Activated T-helper 1 cell treated with anti-CD3 and anti-CD28 coated beads, Interleukin-12 subunit alpha, Interleukin-12 subunit beta, Interleukin-2, Interleukin-4 antibody, amounts not matched to agents 30 ng/mL and 10 ng/mL and 1 ng/mL, durations not matched to agents 14 hours and 24 hours and 36 hours (primary cell): ENCODE measurements at regions of chr16 and their contacts with region 1.

Region 1: GRCh38 chr16:74998481-74999218 is at the start of gene ZNRF1:
- DNase-seq: peak; percentile 74
- H3K4me3 Mint-ChIP-seq: peak within 1 kb of the TSS; percentile 91
- H3K27ac Mint-ChIP-seq: peak within 1 kb of the TSS; percentile 86
- H3K4me1 Mint-ChIP-seq: peaks cover 43% of the 10 kb centered on the region
- H3K27me3 Mint-ChIP-seq: peaks cover 2% of the 10 kb centered on the region
- total RNA-seq, gene ZNRF1: 51.2 and 52.2 TPM in 2 replicates

Region 2: GRCh38 chr16:74852500-74852875 is 146.2 kb before region 1 on chr16:
- intact Hi-C with region 1: no loop called
- DNase-seq: no peak
- H3K4me3 Mint-ChIP-seq: no peak overlapping the region
- H3K27ac Mint-ChIP-seq: no peak overlapping the region
- H3K4me1 Mint-ChIP-seq: no peaks in the 10 kb centered on the region
- H3K27me3 Mint-ChIP-seq: peaks cover 4% of the 10 kb centered on the region

Region 3: DNA sequence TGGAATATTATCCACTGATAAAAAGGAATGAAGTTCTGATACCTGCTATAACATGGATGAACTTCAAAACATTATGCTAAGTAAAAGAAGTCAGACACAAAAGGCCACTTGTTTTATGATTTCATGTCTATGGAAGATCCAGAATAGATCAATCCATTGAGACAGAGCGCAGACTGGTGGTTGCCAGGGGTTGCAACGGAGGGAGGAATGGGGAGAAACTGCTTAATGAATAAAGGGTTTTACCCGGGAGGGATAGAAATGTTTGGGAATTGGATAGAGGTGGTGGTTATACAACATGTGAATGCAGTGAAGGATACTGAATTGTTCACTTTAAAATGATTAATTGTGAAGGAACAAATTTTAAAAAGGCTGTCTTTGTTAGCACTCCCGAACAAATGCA is 43.9 kb before region 1 on chr16:
- intact Hi-C with region 1: no loop called
- DNase-seq: no peak
- H3K4me3 Mint-ChIP-seq: no peak overlapping the region
- H3K27ac Mint-ChIP-seq: no peak overlapping the region
- H3K4me1 Mint-ChIP-seq: peaks cover 8% of the 10 kb centered on the region
- H3K27me3 Mint-ChIP-seq: no peaks in the 10 kb centered on the region

Region 4: GRCh38 chr16:74984535-74985296 is 13.9 kb before region 1 on chr16 and contains the start of gene WDR59:
- intact Hi-C with region 1: loop called (anchors 1 kb)
- DNase-seq: peak; percentile 99
- H3K4me3 Mint-ChIP-seq: peak within 1 kb of the TSS; percentile 90
- H3K27ac Mint-ChIP-seq: peak within 1 kb of the TSS; percentile 90
- H3K4me1 Mint-ChIP-seq: peaks cover 14% of the 10 kb centered on the region
- H3K27me3 Mint-ChIP-seq: peaks cover 3% of the 10 kb centered on the region
- total RNA-seq, gene WDR59: 85.9 and 95.3 TPM in 2 replicates

Region 5: DNA sequence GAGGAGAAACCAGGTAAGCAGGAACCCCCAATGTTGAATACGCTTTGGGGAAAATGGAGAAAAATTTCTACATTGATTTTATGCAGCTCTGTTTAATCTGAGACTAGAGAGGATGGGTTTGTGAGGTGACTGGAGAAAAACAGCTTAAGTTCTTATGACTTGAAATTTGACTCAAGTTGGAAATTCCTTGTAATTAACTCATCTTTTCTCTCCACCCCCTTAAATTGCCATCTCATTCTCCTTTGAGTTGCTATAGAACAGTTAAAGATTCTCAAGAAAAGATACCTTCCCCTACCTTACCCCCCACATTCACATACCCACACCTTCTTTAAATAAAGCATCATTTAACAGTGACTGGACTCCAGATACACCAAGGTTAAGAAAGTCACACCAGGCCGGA is 24.4 kb after region 1 on chr16:
- intact Hi-C with region 1: loop called (anchors 1 kb)
- DNase-seq: no peak
- H3K4me3 Mint-ChIP-seq: peak overlapping the region; percentile 46
- H3K27ac Mint-ChIP-seq: peak overlapping the region; percentile 86
- H3K4me1 Mint-ChIP-seq: peaks cover 47% of the 10 kb centered on the region
- H3K27me3 Mint-ChIP-seq: no peaks in the 10 kb centered on the region

Region 6: DNA sequence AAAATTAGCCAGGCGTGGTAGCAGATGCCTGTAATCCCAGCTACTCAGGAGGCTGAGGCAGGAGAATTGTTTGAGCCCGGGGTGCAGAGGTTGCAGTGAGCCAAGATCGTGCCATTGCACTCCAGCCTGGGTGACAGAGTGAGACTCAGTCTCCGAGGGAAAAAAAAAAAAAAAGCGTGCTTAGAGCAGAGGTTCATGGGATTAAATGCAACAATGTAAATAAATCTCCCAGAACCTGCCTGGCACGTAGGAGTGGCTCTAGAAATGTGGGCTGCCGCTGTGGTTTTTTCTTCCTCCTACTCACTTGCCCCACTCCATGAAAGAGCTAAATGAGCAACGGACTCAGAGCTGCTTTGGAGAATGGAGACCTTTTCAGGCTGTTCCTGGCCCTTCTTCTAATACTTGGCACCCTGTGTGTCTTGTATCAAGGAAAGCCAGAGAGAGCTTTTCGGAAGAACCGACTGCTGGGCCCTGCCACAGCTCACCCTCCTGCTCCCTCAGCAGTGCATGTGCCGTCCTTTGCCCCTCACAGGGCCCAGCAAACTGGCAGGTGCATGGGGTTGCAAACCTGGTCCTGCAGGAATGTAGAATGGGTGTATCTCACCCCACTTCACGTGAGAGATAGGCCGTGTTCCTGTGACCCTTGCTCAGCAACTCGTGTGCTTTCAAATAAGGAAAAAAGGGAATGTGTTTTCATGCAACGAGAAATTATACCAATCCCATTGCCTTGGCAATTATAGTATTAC is 65.9 kb after region 1 on chr16:
- intact Hi-C with region 1: loop called (anchors 1 kb)
- DNase-seq: peak; percentile 17
- H3K4me3 Mint-ChIP-seq: peak overlapping the region; percentile 70
- H3K27ac Mint-ChIP-seq: peak overlapping the region; percentile 85
- H3K4me1 Mint-ChIP-seq: peaks cover 79% of the 10 kb centered on the region
- H3K27me3 Mint-ChIP-seq: no peaks in the 10 kb centered on the region

Region 7: DNA sequence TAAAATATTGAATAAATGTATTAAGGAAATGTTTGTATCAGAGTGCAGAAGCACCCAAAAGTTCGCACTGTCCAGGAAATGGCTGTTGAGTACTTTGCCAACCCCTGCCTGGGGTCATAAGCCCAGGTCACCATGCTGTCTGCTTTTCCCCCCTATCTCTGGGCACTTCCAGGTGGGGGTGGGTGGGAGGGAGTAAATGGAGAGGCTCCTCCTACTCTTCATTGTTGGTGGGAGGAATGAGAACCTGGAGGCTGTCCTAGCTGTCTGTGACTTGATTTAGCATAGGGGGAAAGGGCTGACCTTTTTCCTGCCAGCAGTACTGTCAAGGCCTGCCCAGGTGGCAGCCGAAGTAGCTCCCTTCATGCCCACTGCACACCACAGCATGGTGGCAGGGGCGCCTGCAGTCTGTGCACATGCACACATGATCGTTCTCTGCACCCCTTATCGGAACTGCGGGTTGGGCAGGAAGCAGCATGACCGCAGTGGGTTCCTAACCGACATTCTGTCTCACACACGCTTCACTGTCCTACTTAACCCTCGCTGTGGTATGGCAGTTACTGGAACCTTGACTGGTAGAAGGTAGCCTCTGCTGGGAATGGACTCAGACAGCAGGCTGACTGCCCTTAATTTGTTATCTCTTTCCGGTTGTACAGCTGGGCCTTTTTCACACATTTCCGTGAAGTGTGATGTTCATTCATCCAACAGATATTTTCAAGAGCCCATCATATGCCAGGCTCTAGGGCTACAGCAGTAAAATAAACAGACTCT is 76.5 kb after region 1 on chr16:
- intact Hi-C with region 1: loop called (anchors 1 kb)
- DNase-seq: peak; percentile 83
- H3K4me3 Mint-ChIP-seq: peak overlapping the region; percentile 74
- H3K27ac Mint-ChIP-seq: peak overlapping the region; percentile 92
- H3K4me1 Mint-ChIP-seq: peaks cover 78% of the 10 kb centered on the region
- H3K27me3 Mint-ChIP-seq: no peaks in the 10 kb centered on the region

Region 8: DNA sequence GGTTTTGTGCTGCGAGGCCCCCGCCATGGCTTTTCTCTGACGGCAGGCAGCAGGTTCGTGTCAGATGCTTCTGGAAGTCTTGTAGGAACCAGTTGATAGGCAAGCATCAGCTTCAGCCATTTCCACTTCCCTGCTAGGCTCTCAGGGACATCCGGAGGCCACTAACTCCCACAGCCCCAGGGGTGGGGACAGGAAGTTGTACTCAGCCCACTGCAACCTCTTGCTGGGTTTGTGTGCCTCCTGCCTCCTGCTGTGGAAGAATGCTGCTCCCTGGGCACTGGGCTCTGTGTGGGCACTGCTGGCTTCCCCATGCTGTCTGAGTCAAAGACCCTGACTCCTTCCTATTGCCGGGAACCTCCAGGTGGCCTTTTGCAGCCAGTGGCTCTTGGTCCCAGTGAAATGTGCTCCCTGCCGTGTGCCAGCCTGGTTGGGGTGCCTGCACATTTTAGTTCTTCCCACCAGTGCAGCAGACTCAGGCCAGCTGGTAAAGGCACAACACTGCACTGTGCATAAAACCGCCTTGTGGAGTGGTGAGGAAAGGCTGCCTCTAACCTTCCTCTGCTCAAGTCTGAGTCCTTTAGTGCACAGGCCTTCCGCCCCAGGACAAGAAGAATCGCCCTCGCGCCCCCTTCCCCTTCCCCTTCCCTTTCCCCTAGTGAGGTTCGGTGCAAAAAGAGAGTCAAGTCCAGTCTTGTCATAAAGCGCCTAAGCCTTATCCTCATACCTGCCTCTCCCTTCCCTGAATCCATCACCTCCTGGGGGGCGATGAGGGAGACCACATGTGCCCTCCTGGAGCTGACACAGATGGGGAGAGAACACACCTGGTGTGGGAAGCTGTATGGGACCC is 101.3 kb after region 1 on chr16:
- intact Hi-C with region 1: loop called (anchors 1 kb)
- DNase-seq: peak; percentile 41
- H3K4me3 Mint-ChIP-seq: peak overlapping the region; percentile 46
- H3K27ac Mint-ChIP-seq: peak overlapping the region; percentile 95
- H3K4me1 Mint-ChIP-seq: peaks cover 83% of the 10 kb centered on the region
- H3K27me3 Mint-ChIP-seq: no peaks in the 10 kb centered on the region

Region 9: DNA sequence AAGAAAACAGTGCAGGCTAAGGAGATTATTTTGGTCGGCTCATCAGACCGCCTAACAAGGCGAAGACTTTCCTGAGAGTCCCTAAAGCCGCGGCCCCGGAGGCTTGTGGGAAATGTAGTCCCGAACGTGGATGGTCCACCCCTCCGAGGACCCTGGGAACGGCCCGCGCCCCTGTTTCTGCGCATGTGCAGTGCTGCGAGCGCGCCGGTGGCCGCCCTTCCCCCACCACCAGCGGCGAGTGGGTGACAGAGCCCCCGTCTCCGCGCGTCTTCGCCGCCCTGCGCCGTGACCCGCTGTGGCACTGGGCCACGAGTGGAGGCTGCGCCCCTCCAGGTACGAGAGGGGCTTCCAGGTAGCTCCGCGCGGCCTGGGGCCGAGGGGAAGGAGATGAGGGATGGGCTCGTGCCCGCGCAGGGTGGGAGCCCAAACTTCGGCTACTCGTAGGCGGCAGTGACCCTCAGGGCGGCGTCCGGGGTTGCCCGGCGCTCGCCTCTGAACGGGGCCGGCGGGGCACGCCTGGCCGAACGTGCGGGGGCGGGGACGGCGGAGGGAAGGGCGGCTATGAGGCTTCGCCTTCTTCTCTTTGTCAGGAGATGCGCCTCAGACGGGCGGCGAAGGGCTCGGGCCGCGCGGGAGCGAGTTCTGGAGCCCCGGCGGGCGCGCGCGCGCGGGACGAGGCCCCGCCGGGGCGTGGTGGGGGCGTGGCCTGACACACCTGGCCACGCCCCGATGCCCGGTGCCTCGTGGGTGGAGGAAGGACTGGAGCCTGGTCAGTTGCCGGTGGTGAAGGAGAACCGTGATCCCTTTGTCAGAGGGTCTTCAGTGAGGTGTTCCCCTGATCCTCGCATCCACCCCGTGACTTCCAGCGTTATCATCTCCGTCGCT is 149.9 kb after region 1 on chr16 and contains the start of gene ZFP1:
- intact Hi-C with region 1: loop called (anchors 1 kb)
- DNase-seq: peak; percentile 90
- H3K4me3 Mint-ChIP-seq: peak within 1 kb of the TSS; percentile 90
- H3K27ac Mint-ChIP-seq: peak within 1 kb of the TSS; percentile 84
- H3K4me1 Mint-ChIP-seq: peaks cover 29% of the 10 kb centered on the region
- H3K27me3 Mint-ChIP-seq: no peaks in the 10 kb centered on the region
- total RNA-seq, gene ZFP1: 12.3 and 14.6 TPM in 2 replicates

Region 10: DNA sequence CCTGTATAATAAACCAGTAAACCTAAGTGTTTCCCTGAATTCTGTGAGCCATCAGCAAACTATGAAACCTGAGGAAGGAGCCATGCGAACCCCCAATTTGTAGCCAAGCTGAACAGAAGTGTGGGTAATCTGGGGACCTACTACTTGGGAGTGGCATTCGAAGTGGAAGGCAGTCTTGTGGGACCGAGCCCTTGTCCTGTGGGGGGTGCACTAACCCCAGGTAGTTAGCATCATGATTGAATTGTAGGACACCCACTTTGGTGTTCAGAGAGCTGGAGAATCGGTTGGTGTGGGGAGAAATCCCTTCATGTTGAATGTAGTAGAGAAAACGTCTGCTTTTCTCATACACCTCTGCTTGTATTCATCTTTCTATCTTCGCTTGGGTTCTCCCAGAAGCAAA is 807.3 kb after region 1 on chr16:
- intact Hi-C with region 1: no loop called
- DNase-seq: no peak
- H3K4me3 Mint-ChIP-seq: no peak overlapping the region
- H3K27ac Mint-ChIP-seq: no peak overlapping the region
- H3K4me1 Mint-ChIP-seq: no peaks in the 10 kb centered on the region
- H3K27me3 Mint-ChIP-seq: no peaks in the 10 kb centered on the region